ENCODE measurements at regions of chr18 and their contacts with region 1.

Region 1: GRCh38 chr18:21444465-21445023 is 156.0 kb downstream of the ESCO1 start:
- DNase-seq: no peak
- ATAC-seq: no peak
- H3K4me3 ChIP-seq: no peak overlapping the region
- H3K4me3 Mint-ChIP-seq: no peak overlapping the region
- H3K27ac ChIP-seq: no peak overlapping the region
- H3K27ac Mint-ChIP-seq: no peak overlapping the region
- H3K4me1 ChIP-seq: no peaks in the 10 kb centered on the region
- H3K4me1 Mint-ChIP-seq: no peaks in the 10 kb centered on the region
- H3K27me3 ChIP-seq: no peaks in the 10 kb centered on the region
- H3K27me3 Mint-ChIP-seq: peaks cover 9 to 26% (median 19%) of the 10 kb centered on the region in 5 donors

Region 2: DNA sequence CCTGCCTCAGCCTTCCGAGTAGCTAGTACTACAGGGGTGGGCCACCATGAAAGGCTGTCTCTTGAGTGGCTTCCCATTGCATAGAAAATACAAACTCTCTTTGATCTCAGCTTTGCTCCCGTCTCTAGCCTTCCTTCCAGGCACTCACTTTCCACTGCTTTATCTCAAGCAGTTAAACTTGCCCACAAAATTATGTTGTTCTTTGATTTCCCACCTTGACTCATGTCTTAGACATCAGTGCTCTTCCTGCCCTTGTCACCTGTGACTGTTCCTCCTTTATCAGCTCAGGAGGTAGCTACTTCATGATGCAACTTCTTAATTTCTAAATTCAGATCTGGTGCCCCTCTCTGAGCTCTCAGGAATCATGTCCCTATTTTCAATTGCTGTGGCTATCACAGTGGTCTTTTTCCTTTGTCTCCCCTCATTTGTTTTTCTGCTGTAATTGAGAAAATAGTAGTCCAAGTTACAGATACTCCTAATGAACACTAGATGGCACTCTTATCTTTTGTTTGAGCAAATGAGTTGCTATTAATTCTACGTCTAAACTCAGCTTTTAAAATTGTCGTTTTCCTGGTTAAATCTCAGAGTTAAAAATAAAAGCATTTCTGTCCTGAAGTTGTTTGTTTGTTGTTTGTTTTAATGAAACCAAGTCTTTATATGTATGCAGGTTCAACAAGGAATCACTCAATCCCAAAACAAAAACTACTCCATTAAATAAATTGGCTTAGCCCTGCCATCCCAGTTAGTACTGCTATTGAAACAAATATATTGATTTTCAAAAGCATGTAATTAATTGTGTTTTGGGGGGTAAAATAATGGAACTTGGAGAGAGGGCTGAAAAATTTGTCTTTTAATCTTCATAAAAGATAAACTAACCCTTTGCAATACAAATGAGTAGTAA is 249.4 kb before region 1 on chr18:
- CTCF ChIA-PET with region 1: no interaction called
- POLR2A ChIA-PET with region 1: no interaction called
- intact Hi-C with region 1: loop called in 1 of 2 experiments (anchors 1 kb)
- DNase-seq: peak in 6 of 9 donors; percentile 3 to 26 (median 18)
- ATAC-seq: peak; percentile 41
- H3K4me3 ChIP-seq: no peak overlapping the region
- H3K4me3 Mint-ChIP-seq: no peak overlapping the region
- H3K27ac ChIP-seq: no peak overlapping the region
- H3K27ac Mint-ChIP-seq: peak overlapping the region in 1 of 9 donors; percentile 0
- H3K4me1 ChIP-seq: no peaks in the 10 kb centered on the region
- H3K4me1 Mint-ChIP-seq: peaks cover 0 to 2% (median 0%) of the 10 kb centered on the region in 7 donors
- H3K27me3 ChIP-seq: no peaks in the 10 kb centered on the region
- H3K27me3 Mint-ChIP-seq: peaks cover 13 to 30% (median 20%) of the 10 kb centered on the region in 5 donors

Region 3: DNA sequence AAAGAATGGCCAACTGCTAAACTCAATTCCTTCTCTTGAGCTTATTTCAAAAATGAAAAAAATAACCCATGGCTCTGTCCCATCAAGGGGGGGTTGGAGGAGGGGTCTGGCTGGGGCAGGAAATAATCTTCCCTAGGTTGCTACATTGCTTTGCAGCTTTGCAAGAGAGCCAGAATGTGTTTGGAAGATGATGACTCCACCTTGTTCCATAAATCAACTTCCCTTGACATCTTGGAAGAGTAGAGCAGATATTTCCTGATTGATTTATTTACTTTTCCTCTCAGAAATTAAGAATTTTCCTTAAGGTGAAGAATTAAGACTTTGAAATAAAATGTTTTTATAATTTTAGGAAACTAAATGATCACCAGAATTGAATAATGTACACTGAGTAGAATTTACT is 114.7 kb after region 1 on chr18:
- CTCF ChIA-PET with region 1: no interaction called
- POLR2A ChIA-PET with region 1: no interaction called
- intact Hi-C with region 1: no loop called
- DNase-seq: no peak
- ATAC-seq: no peak
- H3K4me3 ChIP-seq: no peak overlapping the region
- H3K4me3 Mint-ChIP-seq: no peak overlapping the region
- H3K27ac ChIP-seq: no peak overlapping the region
- H3K27ac Mint-ChIP-seq: peak overlapping the region in 3 of 9 donors; percentile 10 to 56 (median 21)
- H3K4me1 ChIP-seq: no peaks in the 10 kb centered on the region
- H3K4me1 Mint-ChIP-seq: peaks cover 0 to 7% (median 4%) of the 10 kb centered on the region in 7 donors
- H3K27me3 ChIP-seq: no peaks in the 10 kb centered on the region
- H3K27me3 Mint-ChIP-seq: no peaks in the 10 kb centered on the region

Region 4: GRCh38 chr18:21612125-21612991 is 167.8 kb after region 1 on chr18 and contains the start of gene SNRPD1:
- CTCF ChIA-PET with region 1: no interaction called
- POLR2A ChIA-PET with region 1: no interaction called
- intact Hi-C with region 1: no loop called
- DNase-seq: peak; percentile 75 to 95 (median 87)
- ATAC-seq: peak; percentile 100
- H3K4me3 ChIP-seq: peak within 1 kb of the TSS; percentile 99
- H3K4me3 Mint-ChIP-seq: peak within 1 kb of the TSS; percentile 90 to 100 (median 96)
- H3K27ac ChIP-seq: peak within 1 kb of the TSS; percentile 95
- H3K27ac Mint-ChIP-seq: peak within 1 kb of the TSS; percentile 91 to 99 (median 98)
- H3K4me1 ChIP-seq: peaks cover 14 to 21% of the 10 kb centered on the region in 2 donors
- H3K4me1 Mint-ChIP-seq: peaks cover 20 to 56% (median 46%) of the 10 kb centered on the region in 7 donors
- H3K27me3 ChIP-seq: no peaks in the 10 kb centered on the region
- H3K27me3 Mint-ChIP-seq: no peaks in the 10 kb centered on the region
- total RNA-seq, gene SNRPD1: 21.9 to 83.4 (median 26.5) TPM